Upper lobe of right lung (tissue), 1 donor: ENCODE measurements at regions of chr9 and their contacts with region 1.

Region 1: GRCh38 chr9:97921959-97922724 is at the start of gene TRMO:
- DNase-seq: peak; percentile 99
- ATAC-seq: peak; percentile 95
- H3K4me3 ChIP-seq: peak within 1 kb of the TSS; percentile 64
- H3K27ac ChIP-seq: peak within 1 kb of the TSS; percentile 99
- H3K4me1 ChIP-seq: peaks cover 29% of the 10 kb centered on the region
- H3K27me3 ChIP-seq: peaks cover 6% of the 10 kb centered on the region
- CTCF ChIP-seq: peak; percentile 60
- total RNA-seq, gene TRMO: 17.3 TPM

Region 2: GRCh38 chr9:97853844-97854695 is 68.1 kb before region 1 on chr9:
- intact Hi-C with region 1: no loop called
- DNase-seq: peak; percentile 65
- ATAC-seq: peak; percentile 42
- H3K4me3 ChIP-seq: peak overlapping the region; percentile 19
- H3K27ac ChIP-seq: no peak overlapping the region
- H3K4me1 ChIP-seq: peaks cover under 1% of the 10 kb centered on the region
- H3K27me3 ChIP-seq: peaks cover 100% of the 10 kb centered on the region
- CTCF ChIP-seq: no peak

Region 3: DNA sequence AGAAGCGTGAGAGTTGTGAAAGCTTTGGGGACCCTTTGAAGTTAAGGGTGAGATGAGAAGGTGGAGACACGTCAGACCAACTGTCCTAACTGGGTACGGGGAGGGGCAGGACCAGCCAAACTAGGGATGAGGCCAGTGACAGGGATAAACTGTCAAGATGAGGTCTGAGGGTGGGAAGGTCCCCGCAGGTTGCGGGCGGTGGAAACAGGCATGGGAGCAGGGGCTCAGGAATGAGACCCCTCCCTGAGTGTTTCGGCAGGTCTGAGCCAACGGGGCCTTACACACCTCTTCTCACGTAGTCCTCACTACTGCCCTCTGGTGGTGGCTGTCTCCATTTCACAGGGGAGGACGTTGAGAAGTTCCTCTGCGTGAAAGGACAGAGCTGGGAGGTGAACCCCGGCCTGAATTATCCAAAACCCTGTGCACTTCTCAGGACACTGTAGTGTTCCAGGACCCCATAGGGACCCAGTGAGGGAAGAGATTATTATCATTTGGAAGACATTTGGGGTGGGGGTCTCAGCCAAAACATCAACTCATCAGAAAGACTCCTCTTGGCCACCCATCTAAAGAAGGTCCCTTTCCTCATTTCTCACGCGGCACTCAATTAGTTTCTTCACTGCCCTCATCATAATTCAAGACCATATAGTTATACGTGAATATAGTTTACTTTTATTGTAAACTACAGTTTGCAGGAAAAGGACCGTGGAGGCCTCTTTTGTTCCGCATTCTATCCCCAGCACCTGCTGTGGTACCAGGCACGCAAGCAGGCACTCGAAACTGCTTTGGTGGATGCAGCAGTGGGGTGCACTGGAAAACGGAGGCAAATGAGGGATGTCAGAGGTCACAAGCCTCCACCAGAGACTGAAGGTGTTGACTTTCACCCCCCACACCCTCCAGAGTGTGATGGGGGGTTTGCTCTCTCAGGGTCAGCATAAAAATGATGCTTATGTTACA is 112.7 kb after region 1 on chr9:
- intact Hi-C with region 1: loop called (anchors 10 kb)
- DNase-seq: peak; percentile 82
- ATAC-seq: peak; percentile 96
- H3K4me3 ChIP-seq: no peak overlapping the region
- H3K27ac ChIP-seq: no peak overlapping the region
- H3K4me1 ChIP-seq: peaks cover 7% of the 10 kb centered on the region
- H3K27me3 ChIP-seq: no peaks in the 10 kb centered on the region
- CTCF ChIP-seq: peak; percentile 83